AG04450 (cell line): ENCODE measurements at regions of chr19 and their contacts with region 1.

Region 1: GRCh38 chr19:45478454-45479238 is 10.8 kb downstream of the FOSB start:
- DNase-seq: peak; percentile 86
- H3K4me3 ChIP-seq: peak overlapping the region; percentile 65
- H3K27ac ChIP-seq: peak overlapping the region; percentile 96
- H3K27me3 ChIP-seq: no peaks in the 10 kb centered on the region
- CTCF ChIP-seq: peak; percentile 95

Region 2: DNA sequence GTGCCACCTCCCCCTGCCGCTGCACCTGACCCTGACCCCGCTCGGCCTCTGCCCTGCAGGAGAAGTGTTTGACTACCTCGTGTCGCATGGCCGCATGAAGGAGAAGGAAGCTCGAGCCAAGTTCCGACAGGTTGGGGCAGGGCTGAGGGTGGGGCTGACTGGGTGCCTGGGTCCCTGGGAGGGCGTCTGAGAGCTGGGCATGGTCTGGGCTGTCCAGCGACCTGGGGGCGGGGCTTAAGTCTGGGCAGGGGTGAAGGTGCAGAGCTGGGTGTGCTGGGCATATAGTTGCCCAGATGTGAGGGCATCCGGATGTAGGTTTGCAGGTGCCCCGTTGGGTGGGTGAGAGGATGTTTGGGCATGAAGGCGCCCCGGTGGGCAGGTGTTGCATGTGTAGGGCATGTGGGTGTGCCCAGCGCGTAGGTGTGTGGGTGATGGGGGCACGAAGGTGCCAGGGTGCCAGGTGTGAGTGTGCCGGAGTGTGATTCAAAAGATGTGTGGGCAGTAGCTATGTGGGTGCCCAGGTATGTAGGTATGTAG is 213.8 kb before region 1 on chr19:
- CTCF ChIA-PET with region 1: no interaction called
- POLR2A ChIA-PET with region 1: no interaction called
- DNase-seq: no peak
- H3K4me3 ChIP-seq: no peak overlapping the region
- H3K27ac ChIP-seq: no peak overlapping the region
- H3K27me3 ChIP-seq: no peaks in the 10 kb centered on the region
- CTCF ChIP-seq: no peak

Region 3: GRCh38 chr19:45404557-45405434 is 73.8 kb before region 1 on chr19 and contains the start of gene PPP1R13L:
- CTCF ChIA-PET with region 1: interaction called, 12 read pairs
- POLR2A ChIA-PET with region 1: no interaction called
- DNase-seq: no peak
- H3K4me3 ChIP-seq: peak within 1 kb of the TSS; percentile 86
- H3K27ac ChIP-seq: peak within 1 kb of the TSS; percentile 89
- H3K27me3 ChIP-seq: no peaks in the 10 kb centered on the region
- CTCF ChIP-seq: no peak
- polyA plus RNA-seq, gene PPP1R13L: 2.4 and 5.1 TPM in 2 replicates

Region 4: GRCh38 chr19:45423589-45424190 is 55.0 kb before region 1 on chr19 and contains the start of gene ERCC1:
- CTCF ChIA-PET with region 1: interaction called, 23 read pairs
- POLR2A ChIA-PET with region 1: interaction called, 3 read pairs
- DNase-seq: peak; percentile 81
- H3K4me3 ChIP-seq: peak within 1 kb of the TSS; percentile 85
- H3K27ac ChIP-seq: peak within 1 kb of the TSS; percentile 99
- H3K27me3 ChIP-seq: no peaks in the 10 kb centered on the region
- CTCF ChIP-seq: no peak
- polyA plus RNA-seq, gene ERCC1: 75.8 and 113 TPM in 2 replicates